Astrocyte of the cerebellum (primary cell): ENCODE measurements at regions of chr9 and their contacts with region 1.

Region 1: GRCh38 chr9:127406799-127407509 is 10.0 kb downstream of the SLC2A8 start:
- DNase-seq: no peak
- H3K4me3 ChIP-seq: no peak overlapping the region
- CTCF ChIP-seq: no peak

Region 2: DNA sequence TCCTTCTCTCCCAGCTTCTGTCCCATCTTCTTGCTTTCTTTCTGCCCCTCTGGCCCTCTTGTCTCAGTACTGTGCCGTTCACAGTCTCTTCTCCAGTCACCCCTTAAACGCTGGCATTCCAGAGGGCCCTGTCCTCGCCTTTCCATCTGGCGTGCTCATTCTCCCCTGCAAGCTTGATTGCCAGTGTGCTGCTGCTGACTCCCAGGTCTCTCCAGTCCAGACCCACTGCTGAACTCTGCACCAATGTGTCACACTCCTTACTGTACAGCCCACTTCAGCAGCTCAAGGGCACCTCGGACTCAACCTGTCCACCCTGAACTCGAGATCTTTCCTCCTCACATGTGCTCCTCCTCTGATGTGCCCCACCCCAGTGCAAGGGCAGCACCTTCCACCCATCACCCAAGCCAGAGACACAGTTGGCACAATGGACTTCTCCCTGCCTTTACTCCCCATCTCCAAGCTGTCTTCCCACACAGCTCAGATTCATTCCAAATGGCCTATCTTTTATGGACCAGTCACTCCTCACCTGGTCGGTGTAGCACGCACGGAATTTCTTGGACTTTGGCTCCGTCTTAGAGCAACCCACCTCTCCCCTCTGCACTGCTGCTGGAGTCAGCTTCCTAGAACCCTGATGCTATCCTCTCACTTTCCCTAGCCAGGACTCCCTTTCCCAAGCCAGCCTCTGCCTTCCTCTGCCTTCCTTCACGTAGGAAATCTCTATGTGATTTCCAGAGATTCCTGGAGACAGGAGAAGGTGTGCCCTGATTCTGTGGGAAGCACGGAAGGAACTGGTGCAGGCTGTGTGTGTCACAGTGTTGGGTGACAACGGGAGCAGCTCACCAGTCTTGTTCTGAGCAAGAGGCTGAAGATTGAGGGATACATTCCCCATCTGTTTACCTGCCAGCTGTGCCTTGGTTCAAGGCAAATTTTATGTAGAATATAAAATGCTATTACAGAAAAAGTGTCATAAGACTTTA is 36.0 kb before region 1 on chr9:
- in situ Hi-C with region 1: loop called (anchors 5 kb)
- DNase-seq: no peak
- H3K4me3 ChIP-seq: no peak overlapping the region
- CTCF ChIP-seq: no peak